ENCODE measurements at regions of chr3 and their contacts with region 1.

Region 1: GRCh38 chr3:123652346-123652984 is 67.6 kb upstream of the HACD2 start:
- DNase-seq: peak; percentile 64 to 92 (median 84)

Region 2: DNA sequence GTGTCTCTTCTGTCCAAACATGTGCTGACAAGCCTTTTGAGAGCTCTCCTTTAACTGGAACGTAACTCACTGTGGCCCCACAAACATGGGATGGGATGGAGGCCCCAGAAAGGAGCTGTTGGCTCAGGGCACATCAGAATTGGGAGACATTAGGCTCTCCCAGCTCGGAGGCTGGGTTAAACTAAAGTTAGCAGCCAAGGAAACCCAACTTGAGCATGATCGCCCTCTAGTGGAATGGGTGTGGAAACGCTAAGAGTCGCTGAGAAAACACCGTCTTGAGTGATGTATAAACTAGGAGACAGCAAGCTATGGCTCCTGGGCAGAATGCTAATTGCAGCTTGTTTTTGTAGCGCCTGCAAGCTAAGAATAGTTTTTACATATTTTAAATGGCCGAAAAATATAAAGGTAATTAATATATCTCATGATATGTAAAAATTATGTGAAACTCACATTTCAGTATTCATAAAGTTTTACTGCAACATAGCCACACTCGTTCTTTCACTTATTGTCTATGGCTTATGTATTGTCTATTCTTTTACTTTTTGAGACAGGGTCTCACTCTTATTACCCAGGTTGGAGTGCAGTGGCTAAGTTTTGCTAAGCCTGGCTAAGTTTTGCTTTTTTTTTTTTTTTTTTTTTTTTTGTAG is 71.2 kb after region 1 on chr3:
- intact Hi-C with region 1: loop called (anchors 5 kb)
- DNase-seq: peak in 40 of 42 donors; percentile 30 to 87 (median 70)

Region 3: GRCh38 chr3:123819949-123820348 is 167.5 kb after region 1 on chr3:
- intact Hi-C with region 1: no loop called
- DNase-seq: peak in 1 of 42 donors; percentile 23

Measured in head of caudate nucleus (tissue), 42 donors.